ENCODE measurements at regions of chr7 and their contacts with region 1.

Region 1: DNA sequence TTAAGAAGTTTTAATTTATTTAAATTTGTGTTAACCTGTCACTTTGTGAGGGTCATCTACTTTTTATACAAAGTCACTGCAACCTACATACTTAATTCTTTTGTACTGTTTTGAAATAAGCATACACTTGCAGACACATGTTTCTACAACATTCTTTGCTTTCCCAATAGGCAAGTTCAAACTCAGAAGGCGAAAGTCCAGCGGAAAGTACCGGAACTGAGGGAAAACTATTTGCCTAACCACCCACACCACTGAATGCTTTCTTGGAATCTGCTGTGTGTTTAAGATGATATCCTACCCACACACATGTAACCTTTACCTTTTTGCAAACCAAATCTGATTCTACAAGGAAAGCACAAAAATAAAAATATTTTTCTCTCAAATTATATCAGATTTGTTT is 139.4 kb upstream of the AGR3 start:
- DNase-seq: peak; percentile 95
- ATAC-seq: peak; percentile 86
- H3K4me3 ChIP-seq: no peak overlapping the region
- H3K27ac ChIP-seq: peak overlapping the region; percentile 81
- H3K4me1 ChIP-seq: peaks cover 52% of the 10 kb centered on the region
- H3K27me3 ChIP-seq: no peaks in the 10 kb centered on the region
- CTCF ChIP-seq: no peak
- EP300 ChIP-seq: peak; percentile 87 to 99
- POLR2A ChIP-seq: no peak
- RAD21 ChIP-seq: no peak

Region 2: DNA sequence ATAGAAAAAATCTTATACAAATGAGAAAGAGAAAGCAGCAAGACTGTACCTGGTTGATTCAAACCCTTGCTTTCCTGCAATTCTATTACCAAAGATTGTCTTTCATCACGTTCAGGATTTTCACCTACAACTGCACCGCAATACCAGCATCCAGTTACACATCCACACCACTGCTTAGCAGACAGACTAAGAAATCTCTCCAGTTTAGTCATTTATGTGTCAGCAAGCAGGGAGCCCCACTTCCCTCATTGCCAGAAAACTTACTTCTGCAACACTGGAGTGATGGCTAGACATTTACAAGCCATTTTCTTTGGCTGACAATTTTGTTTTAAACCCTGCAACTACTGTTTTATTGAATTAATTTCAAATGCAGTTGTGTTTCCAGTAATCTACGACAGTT is 975.1 kb before region 1 on chr7:
- CTCF ChIA-PET with region 1: no interaction called
- POLR2A ChIA-PET with region 1: no interaction called
- in situ Hi-C with region 1: no loop called
- intact Hi-C with region 1: no loop called
- DNase-seq: no peak
- ATAC-seq: no peak
- H3K4me3 ChIP-seq: no peak overlapping the region
- H3K27ac ChIP-seq: no peak overlapping the region
- H3K4me1 ChIP-seq: no peaks in the 10 kb centered on the region
- H3K27me3 ChIP-seq: no peaks in the 10 kb centered on the region
- CTCF ChIP-seq: no peak
- EP300 ChIP-seq: no peak
- POLR2A ChIP-seq: no peak
- RAD21 ChIP-seq: no peak

Region 3: GRCh38 chr7:16989811-16990413 is 31.3 kb before region 1 on chr7:
- CTCF ChIA-PET with region 1: no interaction called
- POLR2A ChIA-PET with region 1: interaction called, 5 read pairs
- in situ Hi-C with region 1: no loop called
- intact Hi-C with region 1: loop called (anchors 1 kb)
- DNase-seq: peak; percentile 100
- ATAC-seq: peak; percentile 96
- H3K4me3 ChIP-seq: peak overlapping the region; percentile 15 to 51 (median 36); a peak in 5 of 6 replicates
- H3K27ac ChIP-seq: peak overlapping the region; percentile 76
- H3K4me1 ChIP-seq: peaks cover 81% of the 10 kb centered on the region
- H3K27me3 ChIP-seq: no peaks in the 10 kb centered on the region
- CTCF ChIP-seq: no peak
- EP300 ChIP-seq: peak; percentile 49 to 98; a peak in 2 of 4 replicates
- POLR2A ChIP-seq: peak in 1 of 2 experiments; percentile 41; a peak in 1 of 4 replicates
- RAD21 ChIP-seq: no peak; the same call in none of the 2 replicates

Region 4: DNA sequence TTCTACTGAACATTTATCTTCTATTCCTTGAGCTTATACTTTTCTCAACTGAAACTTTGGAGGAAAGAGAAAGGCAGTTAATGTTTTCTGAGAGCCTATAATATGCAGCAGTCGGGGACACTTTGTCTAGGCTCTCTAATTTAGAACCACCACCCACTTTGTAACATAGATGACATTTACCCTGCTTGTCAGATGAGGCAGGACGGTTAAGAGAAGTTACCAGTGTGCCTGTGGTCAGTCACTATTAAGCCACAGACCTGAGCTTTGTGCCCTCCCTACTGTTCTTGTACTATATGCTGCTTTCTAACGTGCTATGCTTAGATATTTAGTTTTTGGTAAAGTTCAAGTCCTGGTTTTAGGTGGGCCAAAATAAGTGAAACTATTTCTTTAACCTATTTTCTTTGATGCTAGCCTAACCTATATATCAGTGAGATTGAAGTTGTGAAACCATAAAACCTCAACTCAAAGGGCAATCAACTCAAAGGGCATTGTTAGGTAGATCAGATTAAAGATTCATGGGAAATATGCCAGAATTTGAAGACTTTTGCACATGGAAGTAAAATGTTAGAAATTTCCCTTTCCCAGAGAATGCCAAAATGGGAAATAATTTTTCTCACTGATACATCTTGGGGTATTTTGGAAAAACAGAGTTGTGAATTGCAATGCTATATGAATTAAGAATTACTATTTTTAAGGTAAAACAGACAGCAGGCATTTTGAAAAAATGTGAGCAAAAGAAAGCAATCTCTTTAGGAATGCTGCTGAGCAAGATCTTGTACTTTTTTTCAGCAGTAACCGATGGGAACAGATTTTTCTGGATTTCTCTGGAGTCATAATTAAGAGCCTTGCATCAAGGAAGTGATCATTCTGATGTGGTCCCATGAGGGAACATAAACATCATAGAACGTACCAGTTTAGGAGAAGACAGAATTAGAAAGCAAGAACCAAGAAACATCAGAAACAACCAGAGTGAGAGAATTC is 17.3 kb after region 1 on chr7:
- CTCF ChIA-PET with region 1: no interaction called
- POLR2A ChIA-PET with region 1: no interaction called
- in situ Hi-C with region 1: no loop called
- intact Hi-C with region 1: loop called (anchors 2 kb)
- DNase-seq: peak; percentile 5
- ATAC-seq: no peak
- H3K4me3 ChIP-seq: no peak overlapping the region
- H3K27ac ChIP-seq: no peak overlapping the region
- H3K4me1 ChIP-seq: peaks cover 19% of the 10 kb centered on the region
- H3K27me3 ChIP-seq: no peaks in the 10 kb centered on the region
- CTCF ChIP-seq: no peak
- EP300 ChIP-seq: no peak
- POLR2A ChIP-seq: no peak
- RAD21 ChIP-seq: no peak

Region 5: GRCh38 chr7:17185690-17186070 is 164.5 kb after region 1 on chr7:
- CTCF ChIA-PET with region 1: no interaction called
- POLR2A ChIA-PET with region 1: no interaction called
- in situ Hi-C with region 1: no loop called
- intact Hi-C with region 1: no loop called
- DNase-seq: no peak
- ATAC-seq: no peak
- H3K4me3 ChIP-seq: no peak overlapping the region
- H3K27ac ChIP-seq: peak overlapping the region; percentile 83
- H3K4me1 ChIP-seq: peaks cover 43% of the 10 kb centered on the region
- H3K27me3 ChIP-seq: no peaks in the 10 kb centered on the region
- CTCF ChIP-seq: no peak
- EP300 ChIP-seq: no peak
- POLR2A ChIP-seq: no peak
- RAD21 ChIP-seq: no peak